ENCODE measurements at regions of chr21 and their contacts with region 1.

Region 1: GRCh38 chr21:45140346-45140940 is 66.1 kb downstream of the ADARB1 start:
- H3K4me3 ChIP-seq: no peak overlapping the region
- H3K27ac ChIP-seq: no peak overlapping the region
- H3K4me1 ChIP-seq: no peaks in the 10 kb centered on the region
- CTCF ChIP-seq: peak; percentile 98

Region 2: DNA sequence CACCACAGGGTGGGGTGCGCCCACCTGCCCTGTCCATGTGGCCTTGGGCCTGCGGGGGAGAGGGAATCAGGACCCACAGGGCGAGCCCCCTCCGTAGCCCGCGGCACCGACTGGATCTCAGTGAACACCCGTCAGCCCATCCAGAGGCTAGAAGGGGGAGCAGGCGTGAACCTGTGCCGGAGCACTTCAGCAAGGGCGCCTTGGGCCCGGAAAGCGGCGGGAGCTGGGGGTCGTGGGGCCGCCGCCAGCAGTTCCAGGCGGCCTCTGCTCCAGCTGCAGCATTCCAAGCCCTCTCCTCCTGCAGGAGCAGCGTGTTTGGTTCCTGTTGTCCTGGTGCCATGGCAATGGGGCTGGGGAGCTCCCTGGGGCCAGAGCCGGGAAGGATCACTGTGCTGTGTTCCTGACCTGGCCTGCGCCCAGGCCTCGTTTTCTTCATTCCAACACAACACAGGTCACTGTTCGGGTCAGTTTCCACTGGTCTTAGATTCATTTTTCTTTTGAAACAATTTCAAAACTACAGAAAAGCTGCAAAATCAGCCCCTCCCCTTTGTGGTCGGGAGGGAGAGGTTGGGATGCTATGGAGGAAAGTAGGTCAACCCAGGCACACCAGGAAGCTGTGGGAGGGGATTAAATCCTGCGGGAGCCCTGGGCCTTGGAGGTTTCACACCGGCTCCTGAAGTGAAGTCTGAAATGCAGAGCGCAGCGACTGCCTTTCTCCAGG is 181.8 kb before region 1 on chr21:
- CTCF ChIA-PET with region 1: interaction called, 333 read pairs
- POLR2A ChIA-PET with region 1: no interaction called
- H3K4me3 ChIP-seq: no peak overlapping the region
- H3K27ac ChIP-seq: no peak overlapping the region
- H3K4me1 ChIP-seq: no peaks in the 10 kb centered on the region
- CTCF ChIP-seq: no peak

Region 3: DNA sequence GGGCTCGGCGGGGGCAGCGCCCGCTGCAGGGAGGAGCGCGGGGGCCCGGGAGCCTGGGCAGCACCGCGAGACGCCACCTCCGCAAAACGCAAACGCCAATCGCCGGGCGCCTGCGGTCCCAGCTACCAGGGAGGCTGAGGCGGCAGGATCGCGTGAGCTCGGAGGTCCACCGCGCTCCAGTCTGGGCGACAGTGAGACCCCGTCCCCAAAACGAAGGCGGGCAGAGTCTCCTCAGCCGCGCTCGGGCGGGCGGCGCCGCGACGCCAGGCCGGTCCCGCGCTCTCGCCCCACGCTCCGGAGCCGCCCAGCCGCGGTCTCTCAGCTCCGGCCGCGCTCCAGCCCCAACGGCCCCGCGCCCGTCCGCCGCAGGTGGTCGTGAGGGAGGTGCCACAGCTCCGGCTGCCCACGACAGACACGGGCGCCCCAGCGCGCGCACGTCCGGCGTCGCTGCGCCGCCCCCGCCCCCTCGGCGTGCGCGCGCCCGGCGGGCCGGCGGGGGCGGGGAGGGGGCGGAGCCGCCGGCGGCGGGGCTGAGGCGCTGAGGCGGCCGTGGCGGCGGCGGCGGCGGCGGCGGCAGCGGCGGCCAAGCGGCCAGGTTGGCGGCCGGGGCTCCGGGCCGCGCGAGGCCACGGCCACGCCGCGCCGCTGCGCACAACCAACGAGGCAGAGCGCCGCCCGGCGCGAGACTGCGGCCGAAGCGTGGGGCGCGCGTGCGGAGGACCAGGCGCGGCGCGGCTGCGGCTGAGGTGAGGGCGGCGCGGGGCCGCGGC is 66.2 kb before region 1 on chr21 and contains the start of gene ADARB1:
- CTCF ChIA-PET with region 1: interaction called, 61 read pairs
- POLR2A ChIA-PET with region 1: no interaction called
- H3K4me3 ChIP-seq: peak within 1 kb of the TSS; percentile 71
- H3K27ac ChIP-seq: peak within 1 kb of the TSS; percentile 87
- H3K4me1 ChIP-seq: peaks cover 3% of the 10 kb centered on the region; the same call in 1 of the 2 replicates
- CTCF ChIP-seq: no peak

Region 4: DNA sequence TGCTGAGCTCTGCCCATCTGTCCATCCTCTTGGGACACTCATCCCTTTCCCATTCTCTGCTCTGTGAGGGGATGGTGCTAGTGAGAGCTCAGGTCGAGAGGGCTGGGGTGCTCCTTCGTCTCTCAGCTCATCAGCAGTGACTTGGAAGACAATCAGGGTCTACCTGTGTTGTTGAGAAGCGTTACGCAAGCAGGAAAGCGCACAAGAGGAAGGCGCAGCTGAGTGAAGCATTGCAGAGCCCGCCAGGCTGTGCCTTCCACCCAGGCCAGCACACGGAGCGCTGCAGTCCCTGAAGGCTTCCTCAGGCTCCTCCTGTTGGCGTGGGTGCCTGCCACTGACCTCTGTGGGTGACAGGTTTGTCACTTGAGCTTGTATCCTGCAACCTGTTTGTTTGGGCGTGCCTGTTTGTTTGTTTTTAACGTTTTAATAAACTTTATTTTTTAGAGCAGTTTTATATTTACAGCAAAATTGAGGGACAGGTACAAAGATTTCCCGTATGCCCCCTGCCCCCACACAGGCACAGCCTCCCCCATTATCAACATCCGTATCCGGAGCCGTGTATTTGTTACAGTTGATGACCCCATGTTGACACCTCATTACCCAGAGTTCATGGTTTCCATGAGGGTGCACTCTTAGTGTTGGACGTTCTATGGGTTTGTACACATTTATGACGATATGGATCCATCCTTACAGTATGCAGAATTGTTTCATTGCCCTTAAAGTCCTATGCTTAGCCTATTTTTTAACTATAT is 29.4 kb before region 1 on chr21:
- CTCF ChIA-PET with region 1: interaction called, 120 read pairs
- POLR2A ChIA-PET with region 1: no interaction called
- H3K4me3 ChIP-seq: no peak overlapping the region
- H3K27ac ChIP-seq: no peak overlapping the region
- H3K4me1 ChIP-seq: peaks cover 10% of the 10 kb centered on the region; the same call in 1 of the 2 replicates
- CTCF ChIP-seq: no peak

Region 5: DNA sequence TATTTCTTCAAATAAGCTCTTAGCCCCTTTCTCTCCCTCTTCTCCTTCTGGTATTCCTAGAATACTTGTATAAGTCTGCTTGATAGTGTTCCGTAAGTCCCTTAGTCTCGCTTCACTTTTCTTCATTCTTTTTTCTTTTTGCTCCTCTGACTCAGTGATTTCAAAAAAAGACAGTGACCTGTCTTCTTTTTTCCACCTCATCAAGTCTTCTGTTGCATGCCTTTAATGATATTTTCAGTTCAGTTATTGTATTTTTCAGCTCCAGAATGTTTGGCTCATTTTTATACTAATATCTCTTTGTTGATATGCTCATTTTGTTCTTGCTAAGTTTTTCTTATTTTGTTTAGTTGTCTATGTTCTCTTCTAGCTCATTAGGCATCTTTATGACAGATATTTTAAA is 49.6 kb after region 1 on chr21:
- CTCF ChIA-PET with region 1: interaction called, 25 read pairs
- POLR2A ChIA-PET with region 1: no interaction called
- H3K4me3 ChIP-seq: no peak overlapping the region
- H3K27ac ChIP-seq: no peak overlapping the region
- H3K4me1 ChIP-seq: no peaks in the 10 kb centered on the region
- CTCF ChIP-seq: no peak

Region 6: DNA sequence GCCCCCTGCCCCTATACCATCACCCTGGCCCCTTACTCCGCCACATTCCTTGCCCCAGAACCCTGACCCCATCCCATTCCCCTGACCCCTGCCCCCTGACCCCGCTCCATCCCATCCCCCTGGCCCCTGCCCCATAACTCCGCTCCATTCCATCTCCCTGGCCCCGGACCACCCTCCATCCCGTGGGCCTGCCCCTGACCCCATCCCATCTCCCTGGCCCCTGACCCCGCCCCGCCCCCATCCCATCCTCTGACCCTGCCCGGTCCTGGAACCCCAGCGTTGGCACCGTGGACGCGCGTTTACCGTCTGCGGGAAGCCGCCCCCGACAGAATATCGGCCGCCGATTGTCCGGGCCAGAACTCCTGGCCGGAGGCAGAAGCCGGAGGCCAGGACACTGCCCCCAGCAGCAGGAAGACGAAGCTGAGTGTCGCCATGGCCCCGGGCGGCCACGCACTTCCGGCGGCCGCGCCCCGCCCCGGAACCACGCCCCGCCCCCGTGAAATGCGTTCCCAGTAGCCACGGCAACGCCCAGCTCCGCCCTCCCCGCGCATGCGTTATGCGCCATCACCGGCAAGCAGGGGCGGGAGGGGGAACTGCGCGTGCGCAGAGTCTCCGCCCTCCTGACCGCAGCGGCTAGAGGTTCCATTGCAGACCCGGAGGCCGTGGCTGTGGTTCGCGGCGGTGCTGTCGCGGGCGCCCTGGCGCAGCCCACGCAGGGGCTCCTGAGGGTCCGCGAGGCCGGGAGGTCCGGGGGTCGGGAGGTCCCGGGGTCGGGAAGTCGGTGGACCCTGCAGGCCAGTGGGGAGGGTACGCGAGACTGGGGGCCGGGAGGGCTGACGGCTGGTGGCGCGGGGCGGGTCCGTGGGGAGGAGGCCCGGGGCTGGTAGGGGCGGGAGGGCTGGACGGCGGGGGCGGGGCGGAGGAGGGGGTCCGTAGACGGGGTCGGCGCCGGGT is 147.3 kb after region 1 on chr21 and contains the start of gene POFUT2:
- CTCF ChIA-PET with region 1: interaction called, 47 read pairs
- POLR2A ChIA-PET with region 1: interaction called, 4 read pairs
- H3K4me3 ChIP-seq: peak within 1 kb of the TSS; percentile 78
- H3K27ac ChIP-seq: no peak within 1 kb of the TSS; the same call in 1 of the 2 replicates
- H3K4me1 ChIP-seq: no peaks in the 10 kb centered on the region; the same call in 1 of the 2 replicates
- CTCF ChIP-seq: peak; percentile 43

Region 7: DNA sequence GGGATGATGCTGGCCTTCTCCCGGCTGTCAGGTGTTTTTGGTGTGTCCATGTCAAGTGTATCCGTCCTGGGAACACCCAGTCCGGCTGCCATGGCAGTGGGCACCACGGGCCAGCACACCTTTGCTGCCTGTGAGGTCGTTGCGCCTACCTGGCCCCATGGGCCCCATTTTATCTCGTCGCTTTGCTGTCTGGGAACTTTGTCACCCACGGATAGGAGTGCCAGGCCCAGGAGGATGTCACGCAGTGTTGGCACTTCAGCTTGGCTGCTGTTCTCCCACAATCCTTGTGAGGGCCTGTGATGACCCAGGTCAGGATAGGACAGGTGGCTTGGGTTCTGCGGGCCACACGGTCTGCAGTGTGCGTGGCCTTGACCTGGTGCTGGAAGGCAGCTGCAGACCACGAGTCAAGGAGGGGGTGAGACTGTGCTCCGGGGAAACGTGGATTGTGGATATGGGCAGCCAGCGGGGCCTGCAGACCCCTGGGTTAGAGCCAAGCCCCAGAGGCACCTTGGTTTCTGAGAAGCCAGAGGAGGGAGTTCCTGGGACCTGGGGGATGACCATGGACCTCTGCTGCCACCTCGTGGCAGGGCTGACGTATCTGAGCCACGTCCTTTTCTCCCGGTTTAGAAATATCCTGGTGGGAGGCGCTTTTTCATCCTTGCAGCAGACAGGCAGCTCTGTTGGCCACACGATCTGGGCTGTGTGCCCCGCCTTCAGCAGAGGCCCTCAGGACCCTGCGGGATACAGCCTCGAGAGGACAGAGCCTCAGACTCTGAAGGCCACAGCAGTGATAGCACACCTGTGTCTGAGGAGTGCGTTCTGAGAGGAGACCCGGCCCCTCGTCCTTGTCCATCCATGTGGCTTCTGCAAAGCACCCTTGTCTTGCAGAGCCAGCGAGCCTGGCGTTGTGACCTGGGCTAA is 680.0 kb after region 1 on chr21:
- CTCF ChIA-PET with region 1: interaction called, 39 read pairs
- POLR2A ChIA-PET with region 1: no interaction called
- H3K4me3 ChIP-seq: no peak overlapping the region
- H3K27ac ChIP-seq: no peak overlapping the region
- H3K4me1 ChIP-seq: peaks cover 4% of the 10 kb centered on the region; the same call in 1 of the 2 replicates
- CTCF ChIP-seq: peak; percentile 96

Measured in HEK293 (cell line).